ENCODE measurements at regions of chr17 and their contacts with region 1.

Region 1: GRCh38 chr17:9522074-9522473 is 53.5 kb downstream of the STX8 start:
- DNase-seq: peak; percentile 44
- ATAC-seq: peak; percentile 64
- H3K4me3 ChIP-seq: no peak overlapping the region
- H3K27ac ChIP-seq: no peak overlapping the region
- H3K4me1 ChIP-seq: no peaks in the 10 kb centered on the region
- H3K27me3 ChIP-seq: no peaks in the 10 kb centered on the region
- CTCF ChIP-seq: peak; percentile 73
- EP300 ChIP-seq: no peak
- POLR2A ChIP-seq: no peak
- RAD21 ChIP-seq: peak; percentile 53; the same call in 1 of the 2 replicates

Region 2: DNA sequence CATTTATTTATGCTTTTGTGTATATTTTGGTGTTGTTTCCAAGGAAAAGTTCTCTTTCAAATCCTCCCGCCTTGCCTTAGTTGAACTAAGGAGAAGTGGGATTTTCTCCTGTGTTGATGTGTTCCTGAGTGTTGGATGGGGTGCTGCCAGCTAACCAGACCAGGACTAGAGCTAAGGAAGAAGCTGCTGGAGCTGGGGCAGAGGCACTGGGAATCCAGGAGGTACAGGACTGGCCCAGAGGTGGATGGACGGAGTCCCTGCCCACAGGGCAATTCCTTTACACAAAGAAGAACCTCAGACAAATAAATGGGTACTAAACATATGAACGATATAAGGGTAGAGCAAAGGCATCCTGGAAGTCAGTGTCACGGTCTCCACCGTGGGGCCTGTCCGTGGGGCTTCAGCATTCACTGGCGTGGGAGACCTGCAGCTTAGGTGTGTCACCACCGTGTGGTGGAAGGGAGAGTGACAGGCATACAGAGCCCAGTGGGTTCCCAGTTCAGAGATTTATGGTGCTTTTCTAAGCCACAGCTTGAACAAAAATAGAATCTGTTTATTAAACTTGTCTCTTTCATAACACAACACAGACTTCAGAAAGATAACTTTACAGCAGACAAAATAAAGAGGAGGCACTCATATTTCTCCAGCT is 230.0 kb before region 1 on chr17:
- CTCF ChIA-PET with region 1: no interaction called
- POLR2A ChIA-PET with region 1: no interaction called
- in situ Hi-C with region 1: no loop called
- intact Hi-C with region 1: loop called (anchors 10 kb)
- DNase-seq: peak; percentile 8
- ATAC-seq: peak; percentile 92
- H3K4me3 ChIP-seq: no peak overlapping the region
- H3K27ac ChIP-seq: no peak overlapping the region
- H3K4me1 ChIP-seq: no peaks in the 10 kb centered on the region
- H3K27me3 ChIP-seq: no peaks in the 10 kb centered on the region
- CTCF ChIP-seq: peak; percentile 78
- EP300 ChIP-seq: no peak
- POLR2A ChIP-seq: no peak
- RAD21 ChIP-seq: peak; percentile 64; the same call in 1 of the 2 replicates

Region 3: GRCh38 chr17:9324864-9325263 is 197.2 kb before region 1 on chr17:
- CTCF ChIA-PET with region 1: interaction called, 3 read pairs
- POLR2A ChIA-PET with region 1: no interaction called
- in situ Hi-C with region 1: no loop called
- intact Hi-C with region 1: loop called (anchors 2 kb)
- DNase-seq: peak; percentile 55
- ATAC-seq: peak; percentile 94
- H3K4me3 ChIP-seq: no peak overlapping the region
- H3K27ac ChIP-seq: no peak overlapping the region
- H3K4me1 ChIP-seq: peaks cover 20% of the 10 kb centered on the region
- H3K27me3 ChIP-seq: no peaks in the 10 kb centered on the region
- CTCF ChIP-seq: peak; percentile 39; the same call in 1 of the 2 replicates
- EP300 ChIP-seq: no peak
- POLR2A ChIP-seq: no peak
- RAD21 ChIP-seq: 0 out of 2 replicates have a peak, but pooled peaks have one; percentile 19

Region 4: GRCh38 chr17:9498490-9498889 is 23.6 kb before region 1 on chr17:
- CTCF ChIA-PET with region 1: no interaction called
- POLR2A ChIA-PET with region 1: no interaction called
- in situ Hi-C with region 1: no loop called
- intact Hi-C with region 1: no loop called
- DNase-seq: no peak
- ATAC-seq: no peak
- H3K4me3 ChIP-seq: no peak overlapping the region
- H3K27ac ChIP-seq: no peak overlapping the region
- H3K4me1 ChIP-seq: no peaks in the 10 kb centered on the region
- H3K27me3 ChIP-seq: no peaks in the 10 kb centered on the region
- CTCF ChIP-seq: no peak
- EP300 ChIP-seq: no peak
- POLR2A ChIP-seq: no peak
- RAD21 ChIP-seq: no peak

Measured in HepG2 (cell line).